ENCODE measurements at regions of chr2 and their contacts with region 1.

Region 1: DNA sequence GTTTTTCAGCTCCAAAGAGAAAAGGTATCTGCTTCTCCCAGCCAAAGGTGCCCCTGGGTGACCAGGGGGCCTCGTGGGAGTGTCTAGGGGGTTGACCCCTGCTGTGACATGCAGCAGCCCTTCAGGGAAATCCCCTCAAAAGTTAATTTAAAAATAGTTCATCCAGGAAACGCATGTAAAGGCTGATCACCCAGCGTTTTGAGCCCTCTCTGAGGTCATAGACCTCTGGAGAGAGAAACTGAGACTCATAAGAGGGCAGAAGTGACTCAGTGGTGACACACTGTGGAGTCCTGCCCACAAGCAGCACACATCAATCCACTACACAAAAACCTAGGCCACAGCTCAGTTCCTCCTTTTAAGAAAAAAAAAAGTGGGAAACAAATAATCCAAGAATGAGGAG is 11.9 kb downstream of the GAL3ST2 start:
- DNase-seq: no peak
- H3K4me3 Mint-ChIP-seq: no peak overlapping the region
- H3K27ac Mint-ChIP-seq: no peak overlapping the region
- H3K4me1 Mint-ChIP-seq: peaks cover 6% of the 10 kb centered on the region
- H3K27me3 Mint-ChIP-seq: peaks cover 53% of the 10 kb centered on the region
- CTCF ChIP-seq: no peak

Region 2: GRCh38 chr2:241522477-241522876 is 266.1 kb before region 1 on chr2:
- CTCF ChIA-PET with region 1: no interaction called
- POLR2A ChIA-PET with region 1: no interaction called
- intact Hi-C with region 1: no loop called
- DNase-seq: no peak
- H3K4me3 Mint-ChIP-seq: no peak overlapping the region
- H3K27ac Mint-ChIP-seq: no peak overlapping the region
- H3K4me1 Mint-ChIP-seq: no peaks in the 10 kb centered on the region
- H3K27me3 Mint-ChIP-seq: no peaks in the 10 kb centered on the region
- CTCF ChIP-seq: no peak

Region 3: DNA sequence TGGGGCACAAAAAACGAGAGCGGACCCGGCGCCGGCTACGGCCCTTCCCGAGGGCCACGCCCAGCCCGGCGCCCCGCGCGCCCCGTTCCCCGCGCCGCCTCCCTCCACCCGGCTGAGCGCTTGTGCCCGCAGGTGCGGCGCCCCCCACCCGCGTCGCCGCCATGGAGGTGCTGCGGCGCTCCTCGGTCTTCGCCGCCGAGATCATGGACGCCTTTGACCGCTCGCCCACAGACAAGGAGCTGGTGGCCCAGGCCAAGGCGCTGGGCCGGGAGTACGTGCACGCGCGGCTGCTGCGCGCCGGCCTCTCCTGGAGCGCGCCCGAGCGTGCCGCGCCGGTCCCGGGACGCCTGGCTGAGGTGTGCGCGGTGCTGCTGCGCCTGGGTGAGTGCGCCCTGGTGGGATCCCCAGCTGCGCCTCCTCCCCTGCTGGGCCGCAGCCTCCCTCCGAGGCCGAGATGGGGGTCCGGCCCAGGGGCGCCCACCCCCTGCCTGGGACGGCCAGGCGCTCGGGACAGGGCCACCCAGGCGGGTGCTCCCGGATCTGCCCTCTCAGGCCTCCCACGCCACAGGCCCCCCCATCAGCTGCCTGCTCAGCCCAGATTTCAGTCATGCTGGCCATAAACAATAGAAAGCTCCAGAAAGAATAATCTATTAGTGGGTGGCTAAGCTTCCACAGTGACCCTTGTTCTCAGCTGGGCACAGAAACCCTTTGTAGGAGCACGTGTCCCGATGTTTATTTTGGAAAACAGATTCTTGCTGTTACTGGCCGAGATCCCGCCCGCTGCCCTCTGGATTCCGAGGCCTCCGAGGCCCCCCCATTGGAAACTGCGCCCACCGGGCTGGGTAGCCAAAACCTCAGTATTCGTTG is 229.0 kb before region 1 on chr2:
- CTCF ChIA-PET with region 1: no interaction called
- POLR2A ChIA-PET with region 1: interaction called, 3 read pairs
- intact Hi-C with region 1: loop called (anchors 5 kb)
- DNase-seq: peak; percentile 56
- H3K4me3 Mint-ChIP-seq: peak overlapping the region; percentile 74
- H3K27ac Mint-ChIP-seq: peak overlapping the region; percentile 16
- H3K4me1 Mint-ChIP-seq: peaks cover 11% of the 10 kb centered on the region
- H3K27me3 Mint-ChIP-seq: no peaks in the 10 kb centered on the region
- CTCF ChIP-seq: no peak